ENCODE measurements at regions of chr9 and their contacts with region 1.

Region 1: DNA sequence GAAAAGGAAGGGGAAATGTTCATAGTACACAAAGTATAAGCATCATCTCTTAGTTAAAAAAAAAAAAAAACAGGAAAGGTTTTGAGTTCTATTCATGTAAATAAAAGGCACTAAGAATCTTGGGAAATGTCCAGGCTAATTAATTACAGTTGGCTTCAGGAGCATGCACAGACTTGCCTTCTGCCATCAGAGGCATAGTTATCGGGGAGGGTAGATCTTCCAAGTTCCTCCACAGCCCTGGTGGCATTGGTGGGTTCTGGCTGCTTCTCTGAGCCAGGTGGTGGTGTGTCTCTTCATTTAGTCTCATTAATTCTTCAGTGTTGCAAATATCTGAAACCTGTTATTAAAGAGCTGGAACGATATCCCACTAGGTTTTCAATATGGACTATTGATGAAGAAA is 85.2 kb downstream of the TMEM252 start:
- DNase-seq: no peak
- ATAC-seq: no peak
- H3K4me3 ChIP-seq: no peak overlapping the region
- H3K27ac ChIP-seq: no peak overlapping the region
- H3K4me1 ChIP-seq: no peaks in the 10 kb centered on the region
- H3K27me3 ChIP-seq: no peaks in the 10 kb centered on the region
- CTCF ChIP-seq: no peak

Region 2: GRCh38 chr9:68507130-68507805 is 51.8 kb after region 1 on chr9:
- intact Hi-C with region 1: loop called in 1 of 2 experiments (anchors 5 kb)
- DNase-seq: peak in 2 of 4 donors; percentile 86 to 91
- ATAC-seq: peak; percentile 64
- H3K4me3 ChIP-seq: no peak overlapping the region
- H3K27ac ChIP-seq: peak overlapping the region in 1 of 2 donors; percentile 78
- H3K4me1 ChIP-seq: peaks cover 0 to 19% of the 10 kb centered on the region in 2 donors
- H3K27me3 ChIP-seq: no peaks in the 10 kb centered on the region
- CTCF ChIP-seq: peak; percentile 55 to 72

Region 3: DNA sequence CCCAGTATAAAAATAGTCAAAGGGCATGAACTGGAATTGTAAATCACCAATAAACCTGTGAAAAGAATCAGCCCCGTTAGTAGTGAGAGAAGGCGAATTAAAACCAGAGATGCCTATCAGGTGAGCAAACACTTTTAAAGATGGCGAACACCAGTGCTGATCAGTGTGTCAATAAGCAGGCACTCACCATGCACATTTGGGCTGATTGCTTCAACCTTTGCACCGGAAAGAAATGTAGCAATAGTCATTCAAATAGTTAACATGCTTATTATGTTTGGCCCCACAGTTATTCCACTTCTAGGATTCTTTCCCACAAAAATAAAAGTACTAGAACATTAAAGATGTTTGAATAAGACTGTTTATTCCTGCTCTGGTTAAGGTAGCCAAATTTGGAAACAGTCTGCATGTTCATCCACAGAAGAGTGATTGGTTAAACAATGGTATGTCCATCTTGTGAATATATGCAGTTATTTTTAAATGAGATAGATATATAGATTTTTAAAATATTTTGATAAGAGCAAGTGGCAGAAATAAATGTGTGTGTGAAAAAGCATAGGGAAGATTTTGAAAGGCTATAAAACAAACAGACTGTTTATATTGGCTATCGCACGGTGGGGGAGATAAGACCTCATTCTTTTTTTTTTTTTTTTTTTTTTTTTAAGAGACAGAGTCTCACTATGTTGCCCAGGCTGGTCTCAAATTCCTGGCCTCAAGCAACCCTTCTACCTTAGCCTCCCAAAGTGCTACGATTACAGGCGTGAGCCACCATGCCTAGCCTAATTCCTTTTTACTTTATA is 361.8 kb after region 1 on chr9:
- intact Hi-C with region 1: no loop called
- DNase-seq: no peak
- ATAC-seq: peak; percentile 47
- H3K4me3 ChIP-seq: no peak overlapping the region
- H3K27ac ChIP-seq: no peak overlapping the region
- H3K4me1 ChIP-seq: peaks cover 0 to 5% of the 10 kb centered on the region in 2 donors
- H3K27me3 ChIP-seq: no peaks in the 10 kb centered on the region
- CTCF ChIP-seq: no peak